CD4-positive, alpha-beta T cell (primary cell): ENCODE measurements at regions of chr6 and their contacts with region 1.

Region 1: GRCh38 chr6:27237089-27237803 is 10.3 kb upstream of the PRSS16 start:
- DNase-seq: peak in 4 of 14 experiments; percentile 6 to 43 (median 31)
- ATAC-seq: no peak
- H3K4me3 ChIP-seq: no peak overlapping the region
- H3K4me3 Mint-ChIP-seq: peak overlapping the region; percentile 75
- H3K27ac ChIP-seq: no peak overlapping the region
- H3K27ac Mint-ChIP-seq: peak overlapping the region; percentile 83
- H3K4me1 ChIP-seq: peaks cover 10% of the 10 kb centered on the region
- H3K4me1 Mint-ChIP-seq: peaks cover 31% of the 10 kb centered on the region
- H3K27me3 ChIP-seq: peaks cover 52 to 75% of the 10 kb centered on the region in 2 experiments
- H3K27me3 Mint-ChIP-seq: peaks cover 85% of the 10 kb centered on the region
- CTCF ChIP-seq: no peak

Region 2: DNA sequence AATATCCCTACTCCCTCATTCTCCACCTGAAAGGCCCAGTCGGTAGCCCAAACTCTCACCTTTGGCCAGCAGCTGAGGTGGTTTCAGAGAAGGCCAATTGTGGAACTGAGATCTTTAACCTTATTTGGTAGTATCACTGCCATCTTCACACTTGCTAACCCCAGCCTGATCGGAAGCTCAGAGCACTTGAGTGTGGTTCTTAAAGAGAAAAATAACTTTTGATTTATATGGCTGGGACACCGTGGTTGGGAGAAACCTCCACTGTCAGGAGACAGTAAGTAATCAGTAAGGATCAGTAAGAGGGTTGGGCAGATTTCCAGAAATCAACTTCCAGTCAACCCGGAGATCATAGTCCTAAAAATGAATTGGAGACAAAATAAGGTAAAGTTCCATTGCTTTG is 12.5 kb before region 1 on chr6:
- CTCF ChIA-PET with region 1: no interaction called
- POLR2A ChIA-PET with region 1: no interaction called
- intact Hi-C with region 1: no loop called
- DNase-seq: no peak
- ATAC-seq: no peak
- H3K4me3 ChIP-seq: no peak overlapping the region
- H3K4me3 Mint-ChIP-seq: no peak overlapping the region
- H3K27ac ChIP-seq: no peak overlapping the region
- H3K27ac Mint-ChIP-seq: no peak overlapping the region
- H3K4me1 ChIP-seq: no peaks in the 10 kb centered on the region
- H3K4me1 Mint-ChIP-seq: no peaks in the 10 kb centered on the region
- H3K27me3 ChIP-seq: peaks cover 26 to 58% of the 10 kb centered on the region in 2 experiments
- H3K27me3 Mint-ChIP-seq: peaks cover 76% of the 10 kb centered on the region
- CTCF ChIP-seq: no peak

Region 3: DNA sequence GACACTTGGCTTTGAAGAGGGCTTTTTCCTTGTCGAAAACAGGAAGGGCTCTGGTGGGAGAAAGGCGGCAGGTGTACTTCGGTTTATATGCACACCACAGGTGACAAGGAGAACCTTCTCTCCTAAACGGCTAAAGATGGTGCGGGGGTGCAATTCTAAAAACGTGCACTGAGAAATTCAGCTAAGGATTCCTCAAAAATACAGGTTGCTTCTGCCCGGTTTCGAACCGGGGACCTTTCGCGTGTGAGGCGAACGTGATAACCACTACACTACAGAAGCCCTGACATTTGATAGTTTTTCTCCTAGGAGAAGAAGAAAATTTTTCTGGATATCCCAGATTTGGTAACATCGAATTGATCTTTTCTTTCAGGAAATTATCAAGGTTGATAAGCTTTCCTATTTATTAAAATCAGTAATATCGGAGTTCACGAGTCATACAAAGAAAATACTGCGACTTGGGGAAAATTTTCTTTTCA is 42.9 kb after region 1 on chr6:
- CTCF ChIA-PET with region 1: no interaction called
- POLR2A ChIA-PET with region 1: no interaction called
- intact Hi-C with region 1: loop called in 1 of 2 experiments (anchors 5 kb)
- DNase-seq: peak in 4 of 14 experiments; percentile 9 to 32 (median 24)
- ATAC-seq: no peak
- H3K4me3 ChIP-seq: no peak overlapping the region
- H3K4me3 Mint-ChIP-seq: peak overlapping the region; percentile 30
- H3K27ac ChIP-seq: no peak overlapping the region
- H3K27ac Mint-ChIP-seq: peak overlapping the region; percentile 45
- H3K4me1 ChIP-seq: peaks cover 2% of the 10 kb centered on the region
- H3K4me1 Mint-ChIP-seq: peaks cover 9% of the 10 kb centered on the region
- H3K27me3 ChIP-seq: peaks cover 76 to 87% of the 10 kb centered on the region in 2 experiments
- H3K27me3 Mint-ChIP-seq: peaks cover 95% of the 10 kb centered on the region
- CTCF ChIP-seq: no peak

Region 4: GRCh38 chr6:28258877-28259767 is 1021.9 kb after region 1 on chr6 and contains the start of gene NKAPL:
- CTCF ChIA-PET with region 1: no interaction called
- POLR2A ChIA-PET with region 1: no interaction called
- intact Hi-C with region 1: no loop called
- DNase-seq: peak in 13 of 14 experiments; percentile 16 to 74 (median 52)
- ATAC-seq: peak; percentile 68
- H3K4me3 ChIP-seq: peak within 1 kb of the TSS; percentile 13
- H3K4me3 Mint-ChIP-seq: peak within 1 kb of the TSS; percentile 77
- H3K27ac ChIP-seq: no peak within 1 kb of the TSS
- H3K27ac Mint-ChIP-seq: peak within 1 kb of the TSS; percentile 55
- H3K4me1 ChIP-seq: peaks cover 5% of the 10 kb centered on the region
- H3K4me1 Mint-ChIP-seq: peaks cover 5% of the 10 kb centered on the region
- H3K27me3 ChIP-seq: no peaks in the 10 kb centered on the region
- H3K27me3 Mint-ChIP-seq: peaks cover 18% of the 10 kb centered on the region
- CTCF ChIP-seq: no peak
- total RNA-seq, gene NKAPL: not detected